HEK293 (cell line): ENCODE measurements at regions of chr22 and their contacts with region 1.

Region 1: GRCh38 chr22:26364066-26365015 is 64.7 kb upstream of the ASPHD2 start:
- H3K4me3 ChIP-seq: no peak overlapping the region
- H3K27ac ChIP-seq: no peak overlapping the region
- H3K4me1 ChIP-seq: no peaks in the 10 kb centered on the region
- CTCF ChIP-seq: peak; percentile 62; the same call in 1 of the 2 replicates

Region 2: DNA sequence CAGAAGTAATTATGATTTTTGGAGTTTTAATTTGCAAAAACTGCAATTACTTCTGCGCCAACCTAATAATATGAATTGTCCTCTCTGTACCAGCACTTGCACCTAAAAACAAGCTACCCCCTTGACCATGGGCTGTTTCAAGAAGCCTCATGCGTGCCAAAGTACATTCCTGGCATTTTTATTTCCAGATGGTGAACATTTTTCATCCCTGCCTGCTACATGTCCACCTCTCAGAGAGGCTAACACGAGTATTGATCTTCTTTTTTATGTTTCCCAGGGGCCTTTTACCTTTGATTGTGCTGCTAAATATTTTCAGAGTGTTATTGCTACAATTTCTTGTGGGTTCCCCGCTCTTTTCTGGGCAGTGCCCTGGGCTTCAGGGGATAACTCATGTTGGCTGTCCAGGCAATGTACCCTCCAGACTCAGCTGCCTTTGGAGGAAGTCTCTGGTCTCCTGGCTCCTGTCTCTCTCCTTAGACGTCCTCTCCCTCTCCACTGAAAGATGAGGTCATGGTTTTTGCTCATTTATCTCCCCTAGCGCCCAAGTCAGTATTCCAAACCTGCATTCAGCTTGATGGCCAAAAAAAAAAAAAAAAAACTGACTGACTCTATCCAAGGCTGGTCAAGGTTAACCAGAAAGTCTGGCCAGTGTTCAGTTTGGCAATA is 21.5 kb before region 1 on chr22:
- CTCF ChIA-PET with region 1: interaction called, 14 read pairs
- POLR2A ChIA-PET with region 1: no interaction called
- H3K4me3 ChIP-seq: no peak overlapping the region
- H3K27ac ChIP-seq: no peak overlapping the region
- H3K4me1 ChIP-seq: no peaks in the 10 kb centered on the region
- CTCF ChIP-seq: no peak

Region 3: GRCh38 chr22:26398741-26399153 is 34.4 kb after region 1 on chr22:
- CTCF ChIA-PET with region 1: interaction called, 43 read pairs
- POLR2A ChIA-PET with region 1: no interaction called
- H3K4me3 ChIP-seq: no peak overlapping the region
- H3K27ac ChIP-seq: no peak overlapping the region
- H3K4me1 ChIP-seq: no peaks in the 10 kb centered on the region
- CTCF ChIP-seq: peak; percentile 61; the same call in 1 of the 2 replicates

Region 4: GRCh38 chr22:26429458-26430286 is 65.3 kb after region 1 on chr22:
- CTCF ChIA-PET with region 1: interaction called, 12 read pairs
- POLR2A ChIA-PET with region 1: no interaction called
- H3K4me3 ChIP-seq: peak overlapping the region; percentile 49
- H3K27ac ChIP-seq: no peak overlapping the region; the same call in 1 of the 2 replicates
- H3K4me1 ChIP-seq: no peaks in the 10 kb centered on the region; the same call in 1 of the 2 replicates
- CTCF ChIP-seq: peak; percentile 11; the same call in 1 of the 2 replicates

Region 5: GRCh38 chr22:26672590-26673468 is 308.5 kb after region 1 on chr22:
- CTCF ChIA-PET with region 1: interaction called, 61 read pairs
- POLR2A ChIA-PET with region 1: no interaction called
- H3K4me3 ChIP-seq: peak overlapping the region; percentile 69
- H3K27ac ChIP-seq: peak overlapping the region; percentile 73
- H3K4me1 ChIP-seq: peaks cover 4% of the 10 kb centered on the region; the same call in 1 of the 2 replicates
- CTCF ChIP-seq: peak; percentile 86